Activated CD4-positive, alpha-beta T cell treated with anti-CD3 and anti-CD28 coated beads for 36 hours (primary cell): ENCODE measurements at regions of chr1 and their contacts with region 1.

Region 1: GRCh38 chr1:109532365-109533136 is 7.1 kb upstream of the GPR61 start:
- DNase-seq: peak; percentile 95
- ATAC-seq: peak; percentile 90
- H3K4me3 Mint-ChIP-seq: peak overlapping the region; percentile 15
- H3K27ac Mint-ChIP-seq: peak overlapping the region; percentile 71
- H3K4me1 Mint-ChIP-seq: peaks cover 22% of the 10 kb centered on the region
- H3K27me3 Mint-ChIP-seq: no peaks in the 10 kb centered on the region

Region 2: GRCh38 chr1:109201123-109201703 is 331.3 kb before region 1 on chr1:
- CTCF ChIA-PET with region 1: no interaction called
- POLR2A ChIA-PET with region 1: no interaction called
- intact Hi-C with region 1: loop called in 1 of 2 experiments (anchors 1 kb)
- DNase-seq: peak; percentile 91
- ATAC-seq: peak; percentile 92
- H3K4me3 Mint-ChIP-seq: no peak overlapping the region
- H3K27ac Mint-ChIP-seq: no peak overlapping the region
- H3K4me1 Mint-ChIP-seq: peaks cover 26% of the 10 kb centered on the region
- H3K27me3 Mint-ChIP-seq: no peaks in the 10 kb centered on the region

Region 3: DNA sequence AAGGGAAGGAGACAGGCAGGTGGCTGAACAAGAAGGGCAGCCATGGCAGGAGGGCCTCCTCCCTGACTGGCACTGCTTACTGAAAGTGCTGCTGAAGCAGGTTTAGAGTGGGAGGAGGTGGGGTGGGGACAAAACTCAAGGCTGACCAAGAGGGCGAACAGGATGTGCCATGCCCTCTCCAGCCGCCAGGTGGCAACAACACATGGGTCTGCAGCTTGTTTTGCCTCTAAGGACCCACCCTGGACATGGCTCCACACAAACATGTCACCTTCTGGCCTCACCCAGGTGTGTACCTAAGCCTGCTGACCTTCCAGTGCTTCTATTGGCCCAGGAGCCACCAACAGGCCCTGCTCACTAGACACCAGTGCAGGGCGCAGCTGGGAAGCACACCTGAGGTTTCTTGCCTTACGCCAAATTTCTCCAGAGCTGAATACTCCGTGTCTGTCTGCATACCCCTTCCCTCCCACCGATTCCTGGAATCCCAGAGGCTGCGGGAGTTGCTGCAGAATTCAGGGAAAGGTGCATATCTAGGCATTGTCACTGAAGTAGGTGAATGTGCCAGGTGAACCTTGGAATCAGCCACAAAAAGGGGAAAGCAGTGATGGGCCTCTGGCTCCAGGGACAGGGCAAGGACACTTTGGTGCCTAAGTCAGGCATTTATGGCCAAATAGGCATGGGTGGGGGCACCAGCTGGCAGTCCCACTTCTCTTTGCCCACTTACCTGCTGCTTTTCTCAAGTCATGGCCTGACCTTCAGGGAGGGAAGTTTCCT is 254.9 kb before region 1 on chr1:
- CTCF ChIA-PET with region 1: interaction called, 36 read pairs
- POLR2A ChIA-PET with region 1: no interaction called
- intact Hi-C with region 1: loop called (anchors 1 to 2 kb)
- DNase-seq: peak; percentile 82
- ATAC-seq: peak; percentile 91
- H3K4me3 Mint-ChIP-seq: no peak overlapping the region
- H3K27ac Mint-ChIP-seq: no peak overlapping the region
- H3K4me1 Mint-ChIP-seq: peaks cover 12% of the 10 kb centered on the region
- H3K27me3 Mint-ChIP-seq: no peaks in the 10 kb centered on the region

Region 4: DNA sequence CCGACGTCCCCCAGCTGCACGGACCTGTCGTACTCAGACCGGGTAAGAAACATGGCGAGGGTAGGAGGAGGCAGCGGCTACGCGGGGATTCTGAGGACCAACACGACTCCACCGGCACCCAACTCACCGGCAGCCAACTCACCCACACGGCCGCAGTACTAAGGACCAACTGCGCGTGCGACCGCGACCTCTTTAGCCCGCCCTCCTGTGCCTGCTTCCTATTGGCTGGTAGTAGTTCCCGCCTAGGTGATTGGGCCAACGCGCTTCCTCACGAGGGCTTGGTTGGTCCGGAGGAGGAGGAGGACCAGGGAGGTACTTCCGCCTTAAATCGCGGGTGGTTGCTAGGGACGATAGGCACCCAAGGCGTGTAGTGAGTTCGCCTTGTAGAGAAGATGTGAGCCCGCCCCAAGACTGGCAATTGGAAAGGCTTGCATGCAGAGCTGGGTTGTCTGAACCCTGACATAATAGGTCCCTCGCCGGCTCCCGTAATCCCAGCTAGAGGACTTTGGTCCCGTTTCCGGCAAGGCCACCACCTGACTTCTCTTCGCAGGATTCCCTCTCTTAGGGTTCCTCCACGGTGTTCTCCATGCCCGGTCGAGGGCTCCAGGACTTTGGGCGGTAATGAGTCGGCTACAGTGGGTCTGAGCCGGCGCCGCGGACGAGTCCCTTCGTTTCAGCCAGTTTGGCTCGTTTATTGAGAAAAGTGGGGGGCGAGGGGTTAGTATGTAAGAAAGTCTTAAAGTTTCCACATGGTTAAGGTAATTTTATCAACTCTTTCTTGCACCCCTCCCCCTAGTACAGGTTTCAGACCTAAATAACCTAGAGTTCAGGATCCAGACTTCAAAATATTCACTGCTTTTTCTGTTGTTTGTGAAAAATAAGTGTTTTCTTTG is 106.0 kb before region 1 on chr1 and contains the start of gene PSMA5:
- CTCF ChIA-PET with region 1: interaction called, 38 read pairs
- POLR2A ChIA-PET with region 1: interaction called, 11 read pairs
- intact Hi-C with region 1: loop called (anchors 1 kb)
- DNase-seq: peak; percentile 97
- ATAC-seq: peak; percentile 97
- H3K4me3 Mint-ChIP-seq: peak within 1 kb of the TSS; percentile 91
- H3K27ac Mint-ChIP-seq: peak within 1 kb of the TSS; percentile 96
- H3K4me1 Mint-ChIP-seq: peaks cover 34% of the 10 kb centered on the region
- H3K27me3 Mint-ChIP-seq: no peaks in the 10 kb centered on the region
- total RNA-seq, gene PSMA5: 151 to 249 TPM

Region 5: GRCh38 chr1:109499661-109500536 is 32.7 kb before region 1 on chr1:
- CTCF ChIA-PET with region 1: interaction called, 864 read pairs
- POLR2A ChIA-PET with region 1: interaction called, 7 read pairs
- intact Hi-C with region 1: loop called (anchors 1 kb)
- DNase-seq: peak; percentile 75
- ATAC-seq: peak; percentile 66
- H3K4me3 Mint-ChIP-seq: no peak overlapping the region
- H3K27ac Mint-ChIP-seq: peak overlapping the region; percentile 67
- H3K4me1 Mint-ChIP-seq: peaks cover 89% of the 10 kb centered on the region
- H3K27me3 Mint-ChIP-seq: no peaks in the 10 kb centered on the region

Region 6: GRCh38 chr1:109917768-109918606 is 385.4 kb after region 1 on chr1:
- CTCF ChIA-PET with region 1: no interaction called
- POLR2A ChIA-PET with region 1: no interaction called
- intact Hi-C with region 1: no loop called
- DNase-seq: no peak
- ATAC-seq: no peak
- H3K4me3 Mint-ChIP-seq: no peak overlapping the region
- H3K27ac Mint-ChIP-seq: no peak overlapping the region
- H3K4me1 Mint-ChIP-seq: peaks cover 7% of the 10 kb centered on the region
- H3K27me3 Mint-ChIP-seq: no peaks in the 10 kb centered on the region